Activated CD4-positive, alpha-beta T cell treated with anti-CD3 and anti-CD28 coated beads for 36 hours (primary cell): ENCODE measurements at regions of chr6 and their contacts with region 1.

Region 1: GRCh38 chr6:96923871-96924493 is 546 bp upstream of the KLHL32 start:
- DNase-seq: no peak
- ATAC-seq: peak; percentile 62
- H3K4me3 Mint-ChIP-seq: peak overlapping the region; percentile 88
- H3K27ac Mint-ChIP-seq: peak overlapping the region; percentile 81
- H3K4me1 Mint-ChIP-seq: peaks cover 28% of the 10 kb centered on the region
- H3K27me3 Mint-ChIP-seq: no peaks in the 10 kb centered on the region

Region 2: GRCh38 chr6:95577304-95578105 is 1346.5 kb before region 1 on chr6 and contains the start of gene MANEA:
- CTCF ChIA-PET with region 1: no interaction called
- POLR2A ChIA-PET with region 1: no interaction called
- intact Hi-C with region 1: loop called in 1 of 2 experiments (anchors 1 kb)
- DNase-seq: peak; percentile 92
- ATAC-seq: peak; percentile 92
- H3K4me3 Mint-ChIP-seq: peak within 1 kb of the TSS; percentile 81
- H3K27ac Mint-ChIP-seq: peak within 1 kb of the TSS; percentile 98
- H3K4me1 Mint-ChIP-seq: peaks cover 31% of the 10 kb centered on the region
- H3K27me3 Mint-ChIP-seq: no peaks in the 10 kb centered on the region
- total RNA-seq, gene MANEA: 19.6 to 22.4 TPM

Region 3: DNA sequence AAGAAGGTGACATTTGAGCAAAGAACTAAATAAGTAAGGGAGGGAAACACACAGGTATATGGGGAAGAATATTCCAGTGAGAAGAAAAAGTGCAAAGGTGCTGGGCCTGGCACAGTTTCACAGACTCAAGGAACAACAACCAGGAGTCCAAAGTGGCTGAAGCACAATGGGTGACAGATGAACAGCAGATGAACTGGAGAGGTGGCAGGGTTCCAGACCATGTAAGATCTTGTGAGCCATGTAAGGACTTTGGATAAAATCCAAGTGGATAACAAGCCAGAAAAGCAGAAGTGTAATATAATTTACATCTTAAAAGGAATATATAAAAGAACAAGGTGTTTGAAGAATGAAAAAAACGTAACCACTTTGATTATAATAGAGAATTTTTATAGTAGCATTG is 271.1 kb after region 1 on chr6:
- CTCF ChIA-PET with region 1: no interaction called
- POLR2A ChIA-PET with region 1: no interaction called
- intact Hi-C with region 1: no loop called
- DNase-seq: no peak
- ATAC-seq: no peak
- H3K4me3 Mint-ChIP-seq: no peak overlapping the region
- H3K27ac Mint-ChIP-seq: no peak overlapping the region
- H3K4me1 Mint-ChIP-seq: no peaks in the 10 kb centered on the region
- H3K27me3 Mint-ChIP-seq: no peaks in the 10 kb centered on the region